Mammary epithelial cell (primary cell): ENCODE measurements at regions of chr12 and their contacts with region 1.

Region 1: GRCh38 chr12:68223083-68223747 is 2.4 kb downstream of the IL26 start:
- DNase-seq: peak; percentile 71
- H3K4me3 ChIP-seq: no peak overlapping the region
- H3K27ac ChIP-seq: no peak overlapping the region
- H3K4me1 ChIP-seq: peaks cover 6% of the 10 kb centered on the region
- H3K27me3 ChIP-seq: peaks cover under 1% of the 10 kb centered on the region
- CTCF ChIP-seq: peak; percentile 82 to 90

Region 2: DNA sequence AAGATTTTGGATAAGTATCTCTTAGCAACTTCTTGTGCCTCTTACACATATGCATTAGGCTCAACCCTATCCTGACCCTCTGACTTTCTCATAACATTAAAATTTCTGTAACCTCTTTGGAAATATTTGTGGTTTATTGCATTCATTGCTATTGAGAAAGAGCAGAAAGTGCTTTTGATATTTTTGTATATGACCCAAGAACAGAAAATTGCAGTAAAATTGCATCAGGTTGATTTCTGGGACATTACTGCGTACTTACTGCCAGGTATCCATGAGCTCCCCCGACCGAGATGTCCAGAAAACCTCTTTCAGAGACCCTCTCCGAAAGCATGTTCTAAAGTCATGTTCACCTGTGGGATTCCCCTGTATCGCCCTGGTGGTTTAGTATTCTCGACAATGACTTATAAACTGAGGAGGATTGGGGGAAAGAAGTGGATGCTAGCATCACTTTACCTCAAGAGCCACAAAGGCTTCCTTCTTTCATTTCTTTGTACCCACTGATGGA is 44.7 kb after region 1 on chr12:
- CTCF ChIA-PET with region 1: no interaction called
- dilution Hi-C with region 1: no loop called
- in situ Hi-C with region 1: no loop called
- intact Hi-C with region 1: loop called (anchors 2 kb)
- DNase-seq: peak; percentile 73
- H3K4me3 ChIP-seq: no peak overlapping the region
- H3K27ac ChIP-seq: no peak overlapping the region
- H3K4me1 ChIP-seq: peaks cover 4% of the 10 kb centered on the region
- H3K27me3 ChIP-seq: no peaks in the 10 kb centered on the region
- CTCF ChIP-seq: no peak

Region 3: DNA sequence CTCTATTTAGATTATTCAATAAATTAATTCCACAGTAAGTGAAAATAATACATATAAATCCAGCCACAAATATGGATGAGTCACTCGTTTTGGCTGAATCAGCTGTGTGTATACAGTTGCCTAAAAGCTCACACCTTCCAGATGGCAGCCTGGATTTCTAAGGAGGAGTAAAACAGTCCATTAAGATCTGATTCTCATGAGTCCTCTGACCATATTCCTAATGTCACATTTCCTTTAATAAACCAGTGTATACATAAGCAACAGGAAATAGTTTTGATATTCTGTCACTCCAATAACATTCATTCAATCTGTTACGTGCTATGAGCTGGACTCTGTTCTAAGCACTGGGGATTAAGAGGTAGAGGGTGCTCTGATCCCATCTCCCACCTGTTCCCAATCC is 87.2 kb after region 1 on chr12:
- CTCF ChIA-PET with region 1: no interaction called
- dilution Hi-C with region 1: no loop called
- in situ Hi-C with region 1: loop called in 1 of 2 experiments (anchors 5 kb)
- intact Hi-C with region 1: no loop called
- DNase-seq: peak; percentile 78
- H3K4me3 ChIP-seq: no peak overlapping the region
- H3K27ac ChIP-seq: no peak overlapping the region
- H3K4me1 ChIP-seq: peaks cover 5% of the 10 kb centered on the region
- H3K27me3 ChIP-seq: no peaks in the 10 kb centered on the region
- CTCF ChIP-seq: no peak

Region 4: GRCh38 chr12:68317047-68317667 is 93.9 kb after region 1 on chr12:
- CTCF ChIA-PET with region 1: no interaction called
- dilution Hi-C with region 1: no loop called
- in situ Hi-C with region 1: loop called in 1 of 2 experiments (anchors 5 kb)
- intact Hi-C with region 1: loop called (anchors 1 kb)
- DNase-seq: no peak
- H3K4me3 ChIP-seq: no peak overlapping the region
- H3K27ac ChIP-seq: no peak overlapping the region
- H3K4me1 ChIP-seq: no peaks in the 10 kb centered on the region
- H3K27me3 ChIP-seq: no peaks in the 10 kb centered on the region
- CTCF ChIP-seq: peak; percentile 55 to 57

Region 5: GRCh38 chr12:68686595-68687521 is 463.6 kb after region 1 on chr12 and contains the start of gene NUP107:
- CTCF ChIA-PET with region 1: no interaction called
- dilution Hi-C with region 1: no loop called
- in situ Hi-C with region 1: no loop called
- intact Hi-C with region 1: loop called (anchors 2 kb)
- DNase-seq: peak; percentile 98
- H3K4me3 ChIP-seq: peak within 1 kb of the TSS; percentile 73 to 90 (median 89)
- H3K27ac ChIP-seq: peak within 1 kb of the TSS; percentile 91
- H3K4me1 ChIP-seq: peaks cover 17% of the 10 kb centered on the region
- H3K27me3 ChIP-seq: no peaks in the 10 kb centered on the region
- CTCF ChIP-seq: peak in 1 of 2 donors; percentile 39
- total RNA-seq, gene NUP107: 40.8 to 52.3 TPM